Lower leg skin (tissue), 4 donors: ENCODE measurements at regions of chr22 and their contacts with region 1.

Region 1: DNA sequence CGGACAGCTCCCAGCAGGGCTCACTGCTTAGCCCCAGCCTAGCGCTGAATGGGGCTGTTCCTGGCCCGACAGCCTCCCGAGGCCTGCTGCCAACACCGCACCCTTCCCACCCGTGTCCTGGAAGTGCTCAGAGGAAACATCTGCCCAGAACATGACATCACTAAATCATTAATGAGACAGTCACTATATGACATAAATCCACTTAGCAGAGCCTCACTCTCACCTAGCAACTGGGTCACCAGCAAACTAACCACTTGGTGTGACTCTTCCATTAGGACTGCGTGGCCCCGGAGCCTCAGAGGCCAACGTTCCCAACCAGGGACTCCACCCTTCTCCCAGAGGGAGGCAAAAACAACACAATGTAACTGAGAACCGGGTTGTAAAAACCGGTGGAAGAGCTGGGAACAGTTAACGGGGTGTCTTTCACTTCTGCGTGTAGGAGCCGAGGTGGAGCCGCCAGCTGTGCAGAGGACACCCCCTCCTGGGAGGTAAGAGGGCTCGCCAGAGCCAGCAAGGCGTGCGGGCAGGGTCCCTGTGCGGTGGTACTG is 21.4 kb upstream of the PACSIN2 start:
- DNase-seq: peak; percentile 64 to 94
- H3K4me3 ChIP-seq: no peak overlapping the region
- CTCF ChIP-seq: no peak
- POLR2A ChIP-seq: no peak

Region 2: DNA sequence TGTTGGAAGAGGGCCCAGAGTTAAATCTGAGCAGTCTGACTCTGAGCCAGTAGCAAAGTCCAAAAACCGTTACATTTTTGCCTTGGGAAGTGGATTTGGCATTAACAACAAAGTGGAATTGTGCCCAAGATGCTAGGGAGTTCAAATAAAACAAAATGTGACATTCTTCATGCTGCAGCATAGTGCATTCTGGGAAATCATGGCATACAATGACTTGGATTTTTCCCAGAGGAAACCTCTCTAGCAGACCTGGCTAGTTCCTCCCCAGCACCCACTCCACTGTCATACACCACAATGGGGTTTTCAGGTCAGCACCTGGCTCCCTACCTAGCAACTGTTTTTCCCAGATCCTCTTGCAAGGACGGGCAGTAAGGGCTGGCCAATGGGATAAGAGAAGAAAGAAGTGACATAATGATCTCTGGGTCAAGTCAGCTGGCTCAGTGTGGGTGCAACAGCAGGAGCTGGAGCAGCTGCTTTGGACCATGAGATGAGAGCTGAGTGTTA is 362.4 kb before region 1 on chr22:
- intact Hi-C with region 1: no loop called
- DNase-seq: no peak
- H3K4me3 ChIP-seq: no peak overlapping the region
- CTCF ChIP-seq: no peak
- POLR2A ChIP-seq: no peak

Region 3: DNA sequence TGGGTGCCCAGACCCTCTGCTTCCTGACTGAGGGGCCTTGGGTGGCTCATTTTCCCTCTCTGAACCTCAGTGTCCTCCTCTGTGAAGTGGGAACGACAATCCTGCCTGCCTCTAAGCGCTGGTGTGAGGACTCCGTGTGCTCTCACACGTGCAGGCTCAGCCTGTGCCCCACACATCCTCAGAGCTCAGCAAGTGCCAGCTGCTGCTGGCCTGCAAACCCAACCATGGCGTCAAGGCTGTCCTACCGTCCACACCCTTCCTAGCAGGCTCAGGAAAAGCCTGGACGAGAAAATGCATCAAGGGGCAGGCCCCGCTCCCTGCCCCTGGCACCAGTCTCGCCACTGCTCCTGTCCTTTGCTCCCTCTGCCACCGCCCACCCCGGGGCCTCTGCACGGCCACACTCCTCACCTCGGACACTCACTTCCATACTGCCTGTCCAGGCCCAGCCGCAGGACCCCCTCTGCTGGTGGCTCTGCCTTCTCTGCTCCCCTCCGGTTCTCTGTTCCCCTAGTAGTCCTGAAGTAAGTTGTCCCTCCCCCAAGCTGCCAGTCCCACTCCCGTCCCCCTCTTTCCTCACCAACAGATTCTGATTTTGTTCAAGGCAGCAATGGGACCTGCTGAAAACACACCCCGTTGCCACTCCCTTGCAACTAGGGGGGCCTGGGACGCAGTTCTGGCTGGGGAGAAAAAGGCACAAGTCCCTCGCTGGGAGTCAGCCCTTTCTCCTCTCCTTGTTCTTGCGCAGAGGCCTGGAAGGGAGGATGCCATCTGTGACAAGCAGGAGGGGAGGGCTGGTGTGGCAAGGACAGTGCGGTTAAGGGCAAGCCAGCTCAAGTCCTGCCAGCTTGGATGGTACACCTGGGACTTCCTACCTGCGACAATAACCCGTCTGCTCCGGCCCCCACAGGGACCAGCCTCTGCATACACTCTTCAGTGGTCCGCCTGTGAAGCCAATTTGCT is 241.5 kb before region 1 on chr22:
- intact Hi-C with region 1: loop called (anchors 10 kb)
- DNase-seq: peak in 1 of 2 donors; percentile 76
- H3K4me3 ChIP-seq: no peak overlapping the region
- CTCF ChIP-seq: no peak
- POLR2A ChIP-seq: no peak

Region 4: DNA sequence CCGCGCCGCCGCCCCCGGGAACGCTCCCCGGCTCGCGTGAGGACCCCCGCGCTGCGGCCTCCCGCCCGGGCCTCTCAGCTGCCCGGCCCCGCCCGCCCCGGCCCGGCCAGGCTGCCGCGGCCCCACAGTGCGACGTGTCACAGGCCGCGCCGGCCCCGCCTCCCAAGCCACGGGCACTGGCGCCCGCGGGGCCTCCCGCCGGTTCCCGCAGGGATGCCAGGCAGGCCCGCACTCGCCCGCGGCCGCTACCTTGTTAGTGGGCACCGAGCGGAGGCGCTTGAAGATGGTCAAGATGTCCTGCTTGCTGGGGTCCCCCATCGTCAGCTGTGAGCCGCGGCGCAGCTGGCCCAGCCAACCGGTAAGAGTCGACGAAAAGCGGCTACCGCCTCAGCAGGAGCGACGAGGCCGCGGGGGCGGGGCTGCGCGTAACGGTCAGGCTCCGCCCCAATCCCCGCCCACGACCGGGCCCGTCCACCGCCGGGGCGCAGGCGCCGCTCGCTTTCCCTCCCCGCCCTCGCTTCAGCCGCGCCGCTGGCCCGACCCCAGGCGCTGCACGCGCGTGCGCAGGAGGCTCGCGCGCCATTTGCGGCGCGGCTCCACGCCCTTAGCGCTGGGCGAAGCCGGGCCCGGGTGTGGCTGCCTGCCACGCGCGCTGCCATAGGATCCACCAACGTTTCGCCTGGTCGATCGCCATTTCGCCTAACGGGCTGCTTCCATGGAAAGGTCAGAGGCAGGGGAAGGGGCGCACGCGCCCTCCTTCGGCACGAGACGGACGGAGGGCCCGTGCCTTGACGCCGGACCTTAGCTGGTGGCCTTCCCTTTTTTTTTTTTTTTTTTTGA is 179.3 kb before region 1 on chr22 and contains the start of gene ARFGAP3:
- intact Hi-C with region 1: no loop called
- DNase-seq: peak; percentile 86 to 98
- H3K4me3 ChIP-seq: peak within 1 kb of the TSS; percentile 55
- CTCF ChIP-seq: no peak
- POLR2A ChIP-seq: no peak
- total RNA-seq, gene ARFGAP3: 22.9 to 47.2 (median 31.2) TPM

Region 5: GRCh38 chr22:43308060-43308830 is 271.9 kb after region 1 on chr22:
- intact Hi-C with region 1: no loop called
- DNase-seq: no peak
- H3K4me3 ChIP-seq: no peak overlapping the region
- CTCF ChIP-seq: no peak
- POLR2A ChIP-seq: no peak